Natural killer cell (primary cell): ENCODE measurements at regions of chr11 and their contacts with region 1.

Region 1: DNA sequence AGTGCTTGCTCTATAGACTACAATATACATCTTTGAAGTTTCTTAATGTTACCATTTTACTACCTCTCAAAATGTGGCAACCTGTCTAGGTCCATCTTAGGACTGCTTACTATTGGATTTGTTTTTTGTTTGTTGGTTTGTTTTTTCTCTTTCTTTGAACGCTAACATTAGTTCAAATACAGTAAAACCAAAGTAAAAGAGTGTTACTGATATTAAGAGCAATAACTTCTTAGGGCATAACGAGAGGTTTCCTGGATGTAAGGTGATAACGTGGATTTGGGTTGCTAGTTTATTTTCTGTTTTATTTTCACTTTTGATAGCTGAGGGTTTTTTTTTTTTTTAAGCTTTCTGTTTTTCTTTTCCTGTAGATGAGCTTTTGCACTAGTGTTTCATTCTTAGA is 43.6 kb downstream of the TMEM135 start:
- DNase-seq: peak in 1 of 2 donors; percentile 41
- ATAC-seq: peak; percentile 64 to 74 (median 65)
- H3K4me3 ChIP-seq: peak overlapping the region; percentile 48
- H3K4me3 Mint-ChIP-seq: peak overlapping the region; percentile 88
- H3K27ac ChIP-seq: peak overlapping the region; percentile 81
- H3K27ac Mint-ChIP-seq: peak overlapping the region; percentile 89 to 91
- H3K4me1 ChIP-seq: no peaks in the 10 kb centered on the region
- H3K4me1 Mint-ChIP-seq: peaks cover 21 to 24% of the 10 kb centered on the region in 2 donors
- H3K27me3 ChIP-seq: no peaks in the 10 kb centered on the region
- H3K27me3 Mint-ChIP-seq: no peaks in the 10 kb centered on the region
- CTCF ChIP-seq: no peak

Region 2: DNA sequence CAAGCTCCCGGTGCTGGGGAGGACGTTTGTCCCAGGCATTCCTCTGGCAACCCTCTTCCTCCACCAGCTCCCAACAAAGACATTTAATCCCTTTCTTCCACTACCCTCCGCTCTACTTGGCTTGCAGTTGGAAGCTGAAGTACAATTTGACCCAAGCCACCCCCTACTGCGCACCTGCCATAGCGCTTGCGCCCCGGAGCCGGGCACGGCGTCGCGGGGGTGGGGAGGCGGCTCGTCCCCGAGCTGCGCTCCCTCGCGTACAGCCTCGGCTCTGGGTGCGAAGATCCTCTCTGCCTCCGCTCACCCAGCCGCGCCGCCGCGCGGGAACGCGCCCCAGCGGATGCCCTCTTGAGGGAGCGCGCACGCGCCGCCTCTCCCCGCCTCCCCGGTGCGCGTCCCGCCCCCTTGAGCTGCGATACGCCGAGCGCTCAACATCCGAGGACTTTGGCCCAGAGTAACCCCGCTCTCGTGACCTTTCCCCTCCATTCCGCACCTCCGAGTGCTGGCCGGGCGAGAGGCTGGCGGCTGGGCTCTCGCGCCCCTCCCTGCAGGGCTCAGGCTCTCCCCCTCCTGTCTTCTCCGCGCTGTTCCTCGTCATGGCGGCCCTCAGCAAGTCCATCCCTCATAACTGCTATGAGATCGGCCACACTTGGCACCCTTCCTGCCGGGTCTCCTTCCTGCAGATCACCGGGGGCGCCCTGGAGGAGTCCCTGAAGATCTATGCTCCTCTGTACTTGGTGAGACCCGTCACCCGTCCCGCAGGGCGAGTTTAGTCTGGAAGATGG is 43.7 kb before region 1 on chr11 and contains the start of gene TMEM135:
- intact Hi-C with region 1: loop called (anchors 1 kb)
- DNase-seq: peak; percentile 95 to 96
- ATAC-seq: peak; percentile 95 to 99 (median 96)
- H3K4me3 ChIP-seq: peak within 1 kb of the TSS; percentile 93
- H3K4me3 Mint-ChIP-seq: peak within 1 kb of the TSS; percentile 97
- H3K27ac ChIP-seq: peak within 1 kb of the TSS; percentile 82
- H3K27ac Mint-ChIP-seq: peak within 1 kb of the TSS; percentile 88 to 95
- H3K4me1 ChIP-seq: peaks cover 16% of the 10 kb centered on the region
- H3K4me1 Mint-ChIP-seq: peaks cover 50 to 62% of the 10 kb centered on the region in 2 donors
- H3K27me3 ChIP-seq: no peaks in the 10 kb centered on the region
- H3K27me3 Mint-ChIP-seq: peaks cover 0 to 10% of the 10 kb centered on the region in 2 donors
- CTCF ChIP-seq: no peak
- total RNA-seq, gene TMEM135: 18.8 to 42.0 (median 36.1) TPM